ENCODE measurements at regions of chr1 and their contacts with region 1.

Region 1: DNA sequence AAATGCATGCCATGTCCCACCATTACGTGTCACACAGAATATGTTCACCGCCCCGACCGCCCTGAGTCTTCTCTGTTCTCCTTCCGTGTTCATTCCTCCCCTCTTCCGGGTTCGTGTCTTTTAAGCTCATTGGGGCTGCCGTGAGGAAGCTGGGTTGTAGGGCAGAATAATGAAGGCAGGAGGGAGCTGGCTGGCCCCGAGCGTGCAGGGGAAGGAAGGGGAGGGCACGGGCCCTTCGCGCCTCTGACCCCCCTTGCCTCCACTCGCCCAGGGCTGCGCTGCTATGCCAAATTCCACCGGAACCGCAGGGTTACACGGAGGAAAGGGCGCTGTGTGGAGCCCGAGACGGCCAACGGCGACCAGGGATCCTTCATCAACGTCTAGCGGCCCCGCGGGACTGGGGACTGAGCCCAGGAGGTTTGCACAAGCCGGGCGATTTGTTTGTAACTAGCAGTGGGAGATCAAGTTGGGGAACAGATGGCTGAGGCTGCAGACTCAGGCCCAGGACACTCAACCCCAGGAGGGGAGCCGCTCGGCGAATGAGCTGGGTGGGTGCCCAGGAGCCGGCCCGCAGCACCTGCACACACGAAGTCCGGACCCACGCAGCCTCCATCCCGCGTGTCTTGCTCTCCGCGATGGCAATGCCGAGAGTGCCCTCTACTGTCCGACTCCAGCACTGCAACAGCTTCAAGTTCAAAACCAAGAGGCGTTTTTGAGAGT is 16.5 kb upstream of the AGTRAP start:
- DNase-seq: peak; percentile 69
- ATAC-seq: peak; percentile 78
- H3K4me3 ChIP-seq: peak overlapping the region; percentile 55
- H3K27ac ChIP-seq: no peak overlapping the region
- H3K4me1 ChIP-seq: no peaks in the 10 kb centered on the region; the same call in 1 of the 2 replicates
- H3K27me3 ChIP-seq: 0 out of 2 replicates have a peak, but pooled peaks cover 3% of the 10 kb centered on the region
- CTCF ChIP-seq: peak; percentile 96

Region 2: GRCh38 chr1:11670747-11671146 is 48.7 kb before region 1 on chr1:
- CTCF ChIA-PET with region 1: no interaction called
- POLR2A ChIA-PET with region 1: no interaction called
- intact Hi-C with region 1: loop called (anchors 1 kb)
- DNase-seq: no peak
- ATAC-seq: no peak
- H3K4me3 ChIP-seq: no peak overlapping the region
- H3K27ac ChIP-seq: no peak overlapping the region
- H3K4me1 ChIP-seq: no peaks in the 10 kb centered on the region
- H3K27me3 ChIP-seq: no peaks in the 10 kb centered on the region
- CTCF ChIP-seq: no peak

Region 3: DNA sequence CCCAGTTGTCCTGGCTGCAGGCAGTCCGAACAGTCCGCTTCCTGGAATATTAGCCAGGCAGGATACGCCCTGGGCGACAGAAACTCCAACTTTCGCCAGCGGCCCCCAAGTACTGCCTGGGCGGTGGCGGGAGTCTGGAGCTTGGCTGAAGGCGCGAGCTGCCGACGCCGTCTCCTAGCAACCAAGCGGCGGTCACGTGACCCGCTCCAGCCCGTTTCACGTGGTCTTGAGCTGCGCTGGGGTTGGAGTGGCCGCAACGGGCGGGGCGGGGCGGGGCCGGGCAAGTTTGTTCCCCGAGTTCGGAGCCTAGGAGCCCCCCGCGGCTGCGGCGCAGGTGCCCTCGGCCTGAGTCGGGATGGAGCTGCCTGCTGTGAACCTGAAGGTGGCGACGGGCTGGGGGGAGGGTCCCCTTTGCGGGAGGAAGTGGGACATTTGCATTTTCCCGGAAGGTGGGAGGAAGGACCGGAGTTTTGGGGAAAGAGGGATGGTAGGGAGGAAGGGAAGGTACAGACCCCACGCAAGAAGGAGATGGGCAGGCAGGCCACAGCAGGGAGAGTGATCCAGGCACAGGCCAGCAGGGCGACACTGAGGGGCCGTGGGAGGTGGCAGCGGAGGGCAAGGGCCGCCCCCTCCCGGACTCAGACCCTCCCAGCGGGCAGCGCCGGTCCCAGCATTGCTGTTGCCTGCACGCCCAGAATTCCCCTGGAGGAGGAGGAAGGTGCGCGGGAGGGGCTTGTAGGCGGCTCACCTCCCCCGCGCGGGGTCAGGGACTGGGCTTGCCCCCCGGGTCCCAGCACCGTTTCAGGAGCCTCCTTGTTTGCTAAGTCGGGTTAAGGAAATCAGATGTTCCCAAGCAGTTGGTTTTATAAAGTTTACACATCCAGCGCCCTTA is 16.6 kb after region 1 on chr1 and contains the start of gene AGTRAP:
- CTCF ChIA-PET with region 1: no interaction called
- POLR2A ChIA-PET with region 1: no interaction called
- intact Hi-C with region 1: no loop called
- DNase-seq: peak; percentile 86
- ATAC-seq: peak; percentile 77
- H3K4me3 ChIP-seq: peak within 1 kb of the TSS; percentile 84
- H3K27ac ChIP-seq: peak within 1 kb of the TSS; percentile 86
- H3K4me1 ChIP-seq: peaks cover 9% of the 10 kb centered on the region
- H3K27me3 ChIP-seq: no peaks in the 10 kb centered on the region
- CTCF ChIP-seq: no peak
- total RNA-seq, gene AGTRAP: 73.5 and 76.7 TPM in 2 replicates

Region 4: GRCh38 chr1:11757047-11757446 is 37.6 kb after region 1 on chr1:
- CTCF ChIA-PET with region 1: no interaction called
- POLR2A ChIA-PET with region 1: no interaction called
- intact Hi-C with region 1: loop called (anchors 1 kb)
- DNase-seq: no peak
- ATAC-seq: no peak
- H3K4me3 ChIP-seq: no peak overlapping the region
- H3K27ac ChIP-seq: no peak overlapping the region
- H3K4me1 ChIP-seq: no peaks in the 10 kb centered on the region
- H3K27me3 ChIP-seq: no peaks in the 10 kb centered on the region
- CTCF ChIP-seq: no peak

Region 5: DNA sequence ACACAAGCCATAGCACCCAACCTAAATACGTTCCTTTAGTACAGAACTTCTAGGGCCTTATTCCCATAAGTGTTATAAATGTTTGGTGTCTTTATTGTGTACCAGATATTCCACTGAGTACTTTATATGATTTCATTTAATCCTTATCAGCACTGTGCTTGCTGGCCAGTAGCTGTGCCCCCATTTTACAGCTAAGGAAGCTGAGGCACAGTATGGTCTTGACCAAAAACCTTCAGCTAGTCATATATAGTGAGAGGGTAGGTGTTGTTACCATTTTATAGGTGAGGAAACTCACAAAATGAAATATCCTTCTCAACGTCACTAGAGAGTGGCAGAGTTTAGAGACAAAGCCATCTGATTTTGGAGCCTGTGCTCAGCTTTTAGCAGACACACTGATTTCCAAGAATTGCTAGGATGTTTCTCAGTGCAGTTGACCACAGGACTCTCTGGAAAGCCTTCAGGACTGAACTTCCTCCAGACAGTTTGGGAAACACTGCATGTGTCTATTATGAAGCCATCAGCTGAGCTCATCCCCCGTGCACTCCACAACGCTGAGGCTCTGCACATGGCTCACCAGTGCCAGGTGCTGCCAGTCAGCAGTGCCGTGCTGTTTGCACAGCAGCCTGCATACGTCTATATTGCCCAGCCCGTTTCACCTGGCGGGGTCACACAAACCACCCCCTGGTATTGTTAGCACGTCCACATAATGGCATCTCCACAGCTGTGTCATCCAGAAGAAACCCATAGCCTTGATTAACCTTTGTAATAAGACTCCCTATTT is 112.7 kb after region 1 on chr1:
- CTCF ChIA-PET with region 1: no interaction called
- POLR2A ChIA-PET with region 1: no interaction called
- intact Hi-C with region 1: no loop called
- DNase-seq: no peak
- ATAC-seq: no peak
- H3K4me3 ChIP-seq: no peak overlapping the region
- H3K27ac ChIP-seq: no peak overlapping the region
- H3K4me1 ChIP-seq: no peaks in the 10 kb centered on the region
- H3K27me3 ChIP-seq: no peaks in the 10 kb centered on the region
- CTCF ChIP-seq: no peak